Activated CD4-positive, alpha-beta memory T cell treated with anti-CD3 and anti-CD28 coated beads for 36 hours (primary cell): ENCODE measurements at regions of chr10 and their contacts with region 1.

Region 1: DNA sequence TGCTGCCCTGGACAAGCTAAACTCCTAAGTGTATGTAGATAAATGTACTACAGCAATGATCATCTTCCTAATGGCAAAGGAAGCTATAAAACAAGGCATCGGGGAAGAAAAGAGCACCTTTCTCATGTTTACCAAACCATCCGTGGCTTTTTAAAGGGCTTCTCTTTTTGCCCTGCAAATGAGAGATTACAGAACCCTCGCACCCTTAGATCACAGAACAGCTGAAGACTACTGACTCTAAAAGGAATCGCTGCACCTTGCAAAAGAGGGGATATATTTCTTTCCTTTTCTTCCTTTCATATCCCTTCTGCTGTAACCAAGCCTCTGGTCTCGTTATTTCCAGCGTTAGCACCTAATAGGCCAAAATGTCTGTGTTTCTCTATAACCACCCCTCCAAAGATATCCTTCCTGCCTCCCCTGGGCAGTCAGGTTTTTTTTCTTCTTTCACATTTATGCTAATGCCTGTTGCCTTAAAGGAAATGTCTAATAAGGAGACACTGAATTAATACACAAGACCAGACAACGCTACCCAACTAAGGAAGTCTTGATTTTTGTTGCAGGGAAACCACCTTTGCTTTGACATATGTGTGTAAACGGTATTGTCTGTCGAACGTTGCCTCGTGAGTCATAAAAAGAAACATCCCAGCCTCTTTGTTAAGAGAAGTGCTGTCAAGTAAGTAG is 10.5 kb downstream of the ST8SIA6 start:
- DNase-seq: peak; percentile 38
- H3K4me3 Mint-ChIP-seq: peak overlapping the region; percentile 25
- H3K27ac Mint-ChIP-seq: no peak overlapping the region
- H3K4me1 Mint-ChIP-seq: peaks cover 13% of the 10 kb centered on the region
- H3K27me3 Mint-ChIP-seq: peaks cover 17% of the 10 kb centered on the region

Region 2: GRCh38 chr10:17029581-17030271 is 414.1 kb before region 1 on chr10:
- CTCF ChIA-PET with region 1: no interaction called
- POLR2A ChIA-PET with region 1: no interaction called
- intact Hi-C with region 1: loop called (anchors 5 kb)
- DNase-seq: peak; percentile 93
- H3K4me3 Mint-ChIP-seq: peak overlapping the region; percentile 69
- H3K27ac Mint-ChIP-seq: peak overlapping the region; percentile 85
- H3K4me1 Mint-ChIP-seq: peaks cover 69% of the 10 kb centered on the region
- H3K27me3 Mint-ChIP-seq: no peaks in the 10 kb centered on the region

Region 3: GRCh38 chr10:17454161-17455014 is 10.5 kb after region 1 on chr10 and contains the start of gene ST8SIA6:
- CTCF ChIA-PET with region 1: interaction called, 4 read pairs
- POLR2A ChIA-PET with region 1: interaction called, 3 read pairs
- intact Hi-C with region 1: loop called (anchors 1 kb)
- DNase-seq: peak; percentile 58
- H3K4me3 Mint-ChIP-seq: peak within 1 kb of the TSS; percentile 78
- H3K27ac Mint-ChIP-seq: no peak within 1 kb of the TSS
- H3K4me1 Mint-ChIP-seq: peaks cover 13% of the 10 kb centered on the region
- H3K27me3 Mint-ChIP-seq: peaks cover 9% of the 10 kb centered on the region
- total RNA-seq, gene ST8SIA6: 0.38 TPM in 1 of 2 experiments, not detected in the other

Region 4: DNA sequence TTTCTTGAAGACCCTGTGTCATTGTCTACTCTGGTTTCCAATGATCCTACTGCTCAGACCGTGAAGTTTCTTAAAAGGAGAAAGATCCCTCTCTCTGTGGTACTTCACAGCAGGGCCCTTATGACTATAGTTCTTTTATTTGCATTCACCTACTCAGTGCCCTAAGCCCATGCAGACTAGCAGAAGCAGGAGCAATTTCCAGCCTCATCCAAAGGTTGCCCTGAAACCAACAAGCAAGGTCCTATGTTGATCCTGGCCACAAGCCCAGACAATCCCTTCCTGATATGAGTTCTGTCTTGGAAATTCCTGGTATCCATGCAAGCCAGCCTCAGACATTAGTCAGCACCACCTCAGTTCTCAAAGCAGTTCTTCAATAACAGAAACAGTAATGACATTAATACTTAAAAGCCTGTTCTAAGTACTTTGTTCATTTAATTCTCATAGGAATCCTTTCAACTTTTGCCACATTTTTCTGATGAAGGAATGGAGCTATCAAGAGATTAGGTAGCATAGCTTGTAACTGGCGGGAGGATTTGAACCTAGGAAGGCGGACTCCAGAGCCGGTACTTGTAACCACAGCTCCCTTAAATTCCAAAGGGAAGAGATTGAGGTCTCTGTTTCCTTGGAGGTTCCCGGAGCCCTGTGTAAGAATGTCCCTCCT is 68.6 kb after region 1 on chr10:
- CTCF ChIA-PET with region 1: no interaction called
- POLR2A ChIA-PET with region 1: no interaction called
- intact Hi-C with region 1: loop called (anchors 1 kb)
- DNase-seq: no peak
- H3K4me3 Mint-ChIP-seq: no peak overlapping the region
- H3K27ac Mint-ChIP-seq: peak overlapping the region; percentile 64
- H3K4me1 Mint-ChIP-seq: peaks cover 35% of the 10 kb centered on the region
- H3K27me3 Mint-ChIP-seq: no peaks in the 10 kb centered on the region